ENCODE measurements at regions of chr7 and their contacts with region 1.

Region 1: DNA sequence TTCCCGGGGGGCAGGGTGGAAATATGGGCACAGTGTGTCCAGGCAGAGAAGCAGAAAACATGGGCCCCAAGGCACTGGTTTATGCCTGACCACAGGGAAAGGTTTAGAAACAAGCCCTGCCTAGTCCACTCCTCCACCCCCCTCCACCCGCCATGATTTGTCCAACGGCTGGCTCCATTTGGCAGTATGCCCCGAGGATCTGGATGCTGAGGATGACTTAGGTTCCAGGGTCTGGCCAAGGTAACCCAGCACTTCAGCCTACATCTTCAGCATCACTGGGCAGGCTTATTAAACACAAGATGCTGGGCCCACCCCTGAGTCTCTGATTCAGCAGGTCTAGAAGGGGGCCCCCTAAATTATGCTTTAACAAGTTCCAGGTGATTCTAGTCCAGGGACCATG is 121.9 kb downstream of the RALA start:
- DNase-seq: no peak

Region 2: GRCh38 chr7:39580149-39580874 is 165.0 kb before region 1 on chr7:
- intact Hi-C with region 1: loop called (anchors 1 kb)
- DNase-seq: peak; percentile 79

Region 3: DNA sequence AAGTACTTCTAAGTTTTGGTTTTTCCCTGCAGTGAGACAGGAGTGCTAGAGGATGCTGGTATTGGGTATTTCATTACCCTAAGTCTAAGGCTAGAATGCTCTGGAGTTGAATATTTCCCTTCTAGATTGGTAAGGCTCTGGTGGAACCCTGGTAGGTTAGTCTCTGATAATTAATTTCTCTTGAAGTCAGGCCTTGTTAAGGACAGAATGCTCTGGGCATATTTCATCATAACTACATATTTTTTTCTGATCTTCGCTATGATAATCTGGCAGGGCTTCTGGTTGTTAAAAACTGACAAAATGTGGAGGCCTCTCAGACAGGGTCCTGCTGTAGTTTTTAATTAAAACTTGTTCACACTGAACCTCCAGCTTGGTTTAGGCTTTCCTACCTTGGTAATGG is 288.5 kb after region 1 on chr7:
- intact Hi-C with region 1: no loop called
- DNase-seq: no peak

Measured in cardiac septum (tissue), 1 donor.